Lower leg skin (tissue), 4 donors: ENCODE measurements at regions of chr2 and their contacts with region 1.

Region 1: DNA sequence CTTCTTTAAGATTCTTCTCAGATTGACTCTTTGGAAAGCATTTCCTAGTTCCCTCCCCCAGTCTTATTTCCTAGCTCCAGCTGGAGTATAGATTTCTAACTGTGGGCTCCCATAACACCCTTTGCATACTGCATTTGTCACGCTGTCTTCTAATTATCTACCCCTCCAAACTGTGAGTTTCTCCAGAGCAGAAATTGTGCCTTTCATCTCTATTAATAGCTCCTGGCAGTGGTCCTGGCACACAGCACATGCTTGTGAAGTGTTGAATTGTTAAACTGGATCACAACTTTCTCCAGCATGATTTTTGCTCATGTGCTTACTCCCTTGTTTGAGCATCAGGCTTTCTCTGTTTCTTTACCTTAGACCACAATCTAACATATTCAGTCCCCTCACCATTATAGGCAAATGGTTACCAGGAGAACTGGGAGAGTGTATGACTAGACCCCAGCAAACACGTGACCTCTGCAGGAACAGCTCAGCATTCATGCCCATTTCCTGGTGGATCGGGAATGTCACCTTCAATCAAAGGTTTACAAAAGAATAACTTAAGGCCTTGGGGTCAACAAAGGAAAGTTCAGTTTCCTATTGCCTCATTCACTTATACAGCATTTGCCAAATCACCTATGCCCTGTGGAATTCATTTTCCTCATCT is 175.7 kb upstream of the TANK start:
- DNase-seq: no peak
- H3K4me3 ChIP-seq: no peak overlapping the region
- CTCF ChIP-seq: no peak
- POLR2A ChIP-seq: no peak

Region 2: GRCh38 chr2:159912580-159912979 is 1072.0 kb before region 1 on chr2:
- intact Hi-C with region 1: loop called (anchors 10 kb)
- DNase-seq: no peak
- H3K4me3 ChIP-seq: no peak overlapping the region
- CTCF ChIP-seq: no peak
- POLR2A ChIP-seq: no peak

Region 3: DNA sequence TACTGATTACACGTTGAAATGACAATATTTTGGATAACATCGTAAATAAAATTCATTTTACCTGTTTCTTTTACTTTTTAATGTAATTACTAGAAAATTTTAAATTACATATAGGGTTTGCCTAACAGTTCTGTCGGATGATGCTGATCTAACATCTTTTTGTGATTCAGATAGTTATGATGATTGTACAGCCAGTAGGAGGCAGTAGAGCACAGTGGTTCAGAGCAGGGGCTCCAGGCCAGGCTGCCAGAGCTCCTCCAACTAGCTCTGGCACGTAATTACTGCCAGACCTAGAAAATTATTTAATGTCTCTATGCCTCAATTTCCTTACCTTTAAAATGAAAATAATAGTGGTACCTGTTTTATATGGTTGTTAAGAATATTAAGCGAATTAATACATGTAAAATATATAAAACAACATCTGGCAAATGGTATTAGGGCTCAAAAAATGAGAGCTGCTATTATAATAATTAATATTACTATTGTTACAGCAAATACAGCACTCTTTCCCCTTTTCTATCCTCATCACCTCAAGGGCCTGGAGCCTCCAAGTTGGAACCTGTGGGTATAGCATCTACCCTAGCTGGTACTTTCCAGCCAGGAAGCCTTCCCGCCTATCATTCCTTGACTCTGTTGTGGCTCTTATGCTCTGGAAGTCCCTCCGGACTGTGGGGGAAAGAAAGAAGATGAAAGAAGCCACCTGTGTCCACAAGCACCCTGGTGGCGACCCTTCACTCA is 874.4 kb before region 1 on chr2:
- intact Hi-C with region 1: loop called (anchors 10 kb)
- DNase-seq: no peak
- H3K4me3 ChIP-seq: no peak overlapping the region
- CTCF ChIP-seq: no peak
- POLR2A ChIP-seq: no peak

Region 4: DNA sequence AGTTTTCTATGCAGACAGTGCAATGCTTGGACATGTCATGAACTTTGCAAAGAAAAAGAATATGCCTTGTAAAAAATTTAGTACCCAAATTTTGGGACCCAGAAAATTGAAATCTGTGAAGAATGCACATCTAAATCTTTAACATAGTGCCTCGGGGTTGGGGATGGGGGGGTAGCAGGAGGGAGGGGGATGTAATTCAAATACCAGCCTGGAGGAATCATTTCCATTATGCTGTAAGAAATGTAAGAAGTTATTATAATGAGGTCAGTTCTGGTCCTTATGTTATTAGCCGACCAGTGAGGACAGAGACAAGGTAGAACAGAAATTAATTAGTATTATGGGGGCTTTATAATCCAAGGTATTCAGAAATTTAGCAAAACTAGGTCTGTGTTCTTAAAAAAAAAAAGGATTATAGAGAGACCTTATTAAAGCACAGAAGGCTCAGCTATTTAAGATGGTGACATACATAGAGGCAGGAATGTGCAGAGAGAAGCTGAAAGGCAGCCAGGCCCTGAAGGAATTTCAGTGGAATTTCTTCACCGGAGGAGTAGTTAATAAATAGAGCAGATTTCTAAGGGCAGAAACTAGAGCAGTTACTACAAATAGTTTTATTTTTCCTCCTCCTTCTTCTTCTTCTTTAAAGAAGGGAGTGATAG is 401.9 kb before region 1 on chr2:
- intact Hi-C with region 1: no loop called
- DNase-seq: no peak
- H3K4me3 ChIP-seq: no peak overlapping the region
- CTCF ChIP-seq: no peak
- POLR2A ChIP-seq: no peak

Region 5: GRCh38 chr2:162113776-162114168 is 1129.2 kb after region 1 on chr2:
- intact Hi-C with region 1: no loop called
- DNase-seq: peak in 1 of 2 donors; percentile 73
- H3K4me3 ChIP-seq: no peak overlapping the region
- CTCF ChIP-seq: no peak
- POLR2A ChIP-seq: no peak